Aorta (tissue), 5 donors: ENCODE measurements at regions of chr15 and their contacts with region 1.

Region 1: GRCh38 chr15:65638681-65639089 is 16.9 kb downstream of the SLC24A1 start:
- DNase-seq: no peak
- ATAC-seq: peak; percentile 79
- H3K4me3 ChIP-seq: no peak overlapping the region
- H3K27ac ChIP-seq: no peak overlapping the region
- H3K4me1 ChIP-seq: no peaks in the 10 kb centered on the region
- H3K27me3 ChIP-seq: no peaks in the 10 kb centered on the region

Region 2: DNA sequence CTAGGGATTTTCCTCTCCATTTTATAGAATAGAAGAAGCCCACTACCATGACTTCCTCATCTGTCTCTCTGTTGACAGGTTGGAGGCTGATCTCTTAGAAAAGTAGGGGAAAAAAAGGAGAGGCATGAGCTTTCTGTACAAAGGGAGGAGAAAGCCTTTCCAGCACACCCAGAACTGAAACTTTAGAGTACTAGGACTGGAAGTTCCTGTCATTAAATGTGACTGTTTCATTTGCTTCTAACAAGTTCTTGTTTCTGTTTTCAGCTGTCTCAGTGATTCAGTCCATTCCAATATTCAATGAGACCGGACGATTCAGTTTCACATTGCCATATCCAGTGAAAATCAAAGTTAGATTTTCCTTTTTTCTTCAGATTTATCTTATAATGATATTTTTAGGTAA is 66.7 kb before region 1 on chr15:
- intact Hi-C with region 1: no loop called
- DNase-seq: no peak
- ATAC-seq: no peak
- H3K4me3 ChIP-seq: no peak overlapping the region
- H3K27ac ChIP-seq: no peak overlapping the region
- H3K4me1 ChIP-seq: no peaks in the 10 kb centered on the region
- H3K27me3 ChIP-seq: no peaks in the 10 kb centered on the region

Region 3: DNA sequence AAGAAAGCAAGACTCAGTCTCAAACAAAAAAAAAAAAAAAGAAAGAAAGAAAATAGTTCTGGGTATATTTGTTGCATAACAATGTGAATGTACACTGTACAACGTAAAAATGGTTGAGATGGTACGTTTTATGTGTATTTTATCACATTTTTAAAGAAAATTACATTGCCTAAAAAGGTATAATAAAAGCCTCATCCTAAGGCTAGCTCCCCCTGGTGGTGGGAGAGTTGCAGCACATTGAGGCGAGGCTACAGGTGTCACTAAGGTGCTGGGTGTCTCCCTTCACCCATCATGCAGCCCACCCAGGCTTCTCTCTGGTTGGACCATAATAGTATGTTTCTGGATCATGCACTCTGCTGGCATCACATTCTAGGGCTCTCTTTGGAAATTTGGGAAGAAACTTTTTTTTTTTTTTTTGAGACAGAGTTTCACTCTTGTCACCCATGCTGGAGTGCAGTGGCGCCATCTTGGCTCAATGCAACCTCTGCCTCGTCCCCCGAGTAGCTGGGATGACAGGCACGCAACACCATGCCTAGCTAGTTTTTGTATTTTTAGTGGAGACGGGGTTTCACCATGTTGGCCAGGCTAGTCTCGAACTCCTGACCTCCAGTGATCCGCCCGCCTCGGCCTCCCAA is 218.3 kb after region 1 on chr15:
- intact Hi-C with region 1: loop called (anchors 10 kb)
- DNase-seq: peak; percentile 71 to 79
- ATAC-seq: peak; percentile 67
- H3K4me3 ChIP-seq: no peak overlapping the region
- H3K27ac ChIP-seq: no peak overlapping the region
- H3K4me1 ChIP-seq: no peaks in the 10 kb centered on the region
- H3K27me3 ChIP-seq: no peaks in the 10 kb centered on the region

Region 4: DNA sequence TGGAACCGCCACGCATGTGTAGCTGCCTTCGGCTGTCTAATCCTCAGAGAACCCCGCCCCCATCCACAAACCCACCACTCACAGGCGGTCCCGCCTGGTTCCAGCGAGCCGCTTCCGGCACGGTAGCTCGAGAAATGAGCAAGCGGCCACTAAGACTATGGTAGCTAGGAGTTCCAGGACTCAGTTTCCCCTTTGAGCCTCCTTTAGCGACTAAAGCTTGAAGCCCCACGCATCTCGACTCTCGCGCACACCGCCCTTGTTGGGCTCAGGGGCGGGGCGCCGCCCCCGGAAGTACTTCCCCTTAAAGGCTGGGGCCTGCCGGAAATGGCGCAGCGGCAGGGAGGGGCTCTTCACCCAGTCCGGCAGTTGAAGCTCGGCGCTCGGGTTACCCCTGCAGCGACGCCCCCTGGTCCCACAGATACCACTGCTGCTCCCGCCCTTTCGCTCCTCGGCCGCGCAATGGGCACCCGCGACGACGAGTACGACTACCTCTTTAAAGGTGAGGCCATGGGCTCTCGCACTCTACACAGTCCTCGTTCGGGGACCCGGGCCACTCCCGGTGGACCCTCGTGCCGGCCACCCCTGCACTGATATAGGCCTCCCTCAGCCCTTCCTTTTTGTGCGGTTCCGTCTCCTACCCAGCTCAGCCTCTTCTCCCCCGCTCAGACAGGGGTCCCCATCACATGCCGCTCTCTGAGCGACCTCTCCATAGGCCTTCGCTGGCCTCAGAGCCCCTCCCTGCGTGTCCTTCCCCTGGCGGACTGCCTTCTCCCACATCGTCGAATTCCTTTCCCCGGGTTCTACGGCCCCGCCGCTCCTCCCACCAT is 230.7 kb after region 1 on chr15 and contains the start of gene RAB11A:
- intact Hi-C with region 1: loop called in 1 of 2 experiments (anchors 10 kb)
- DNase-seq: peak; percentile 97 to 98
- ATAC-seq: peak; percentile 99
- H3K4me3 ChIP-seq: peak within 1 kb of the TSS; percentile 82 to 93
- H3K27ac ChIP-seq: peak within 1 kb of the TSS; percentile 85 to 94
- H3K4me1 ChIP-seq: no peaks in the 10 kb centered on the region
- H3K27me3 ChIP-seq: no peaks in the 10 kb centered on the region
- total RNA-seq, gene RAB11A: 149 to 156 TPM

Region 5: GRCh38 chr15:66004618-66005262 is 366.1 kb after region 1 on chr15:
- intact Hi-C with region 1: no loop called
- DNase-seq: peak in 1 of 2 donors; percentile 34
- ATAC-seq: no peak
- H3K4me3 ChIP-seq: no peak overlapping the region
- H3K27ac ChIP-seq: no peak overlapping the region
- H3K4me1 ChIP-seq: no peaks in the 10 kb centered on the region
- H3K27me3 ChIP-seq: peaks cover 0 to 2% of the 10 kb centered on the region in 2 donors

Region 6: DNA sequence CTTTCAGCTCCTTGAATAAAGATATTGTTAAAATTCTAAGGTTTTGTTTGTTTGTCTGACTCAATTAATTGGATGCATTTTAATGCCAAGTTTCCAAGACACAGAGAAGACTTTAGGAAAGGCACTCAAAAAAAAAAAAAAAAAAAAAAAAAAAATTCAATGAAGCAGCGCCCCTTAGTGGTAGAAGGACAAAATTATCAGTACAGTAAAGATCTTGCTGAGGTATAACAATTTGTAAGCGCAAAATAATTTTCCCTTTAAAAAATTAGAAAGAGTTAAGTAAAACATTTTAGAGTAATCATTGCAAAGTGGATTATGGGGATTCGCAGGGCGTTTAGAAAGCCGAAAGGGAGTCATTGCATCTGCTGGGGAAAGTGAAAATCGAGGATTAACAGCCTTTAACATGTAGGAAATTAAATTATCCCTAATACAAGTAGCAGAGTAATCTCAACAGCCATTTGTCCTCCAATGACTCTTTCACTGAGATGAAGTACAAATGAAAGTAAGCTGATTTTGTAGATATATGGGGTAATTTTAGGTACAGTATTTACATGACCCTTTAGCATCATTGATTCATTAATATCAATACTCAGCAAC is 648.9 kb after region 1 on chr15:
- intact Hi-C with region 1: loop called (anchors 5 to 10 kb)
- DNase-seq: no peak
- ATAC-seq: no peak
- H3K4me3 ChIP-seq: no peak overlapping the region
- H3K27ac ChIP-seq: no peak overlapping the region
- H3K4me1 ChIP-seq: peaks cover 0 to 3% of the 10 kb centered on the region in 2 donors
- H3K27me3 ChIP-seq: no peaks in the 10 kb centered on the region